CD8-positive, alpha-beta T cell (primary cell): ENCODE measurements at regions of chr18 and their contacts with region 1.

Region 1: GRCh38 chr18:49041435-49042245 is 90.9 kb upstream of the SMAD7 start:
- DNase-seq: peak in 7 of 9 experiments; percentile 21 to 63 (median 56)
- ATAC-seq: peak; percentile 56
- H3K4me3 ChIP-seq: no peak overlapping the region
- H3K4me3 Mint-ChIP-seq: no peak overlapping the region
- H3K27ac ChIP-seq: no peak overlapping the region
- H3K27ac Mint-ChIP-seq: no peak overlapping the region
- H3K4me1 ChIP-seq: no peaks in the 10 kb centered on the region
- H3K4me1 Mint-ChIP-seq: peaks cover 4% of the 10 kb centered on the region
- H3K27me3 ChIP-seq: no peaks in the 10 kb centered on the region
- H3K27me3 Mint-ChIP-seq: no peaks in the 10 kb centered on the region
- CTCF ChIP-seq: peak; percentile 28

Region 2: DNA sequence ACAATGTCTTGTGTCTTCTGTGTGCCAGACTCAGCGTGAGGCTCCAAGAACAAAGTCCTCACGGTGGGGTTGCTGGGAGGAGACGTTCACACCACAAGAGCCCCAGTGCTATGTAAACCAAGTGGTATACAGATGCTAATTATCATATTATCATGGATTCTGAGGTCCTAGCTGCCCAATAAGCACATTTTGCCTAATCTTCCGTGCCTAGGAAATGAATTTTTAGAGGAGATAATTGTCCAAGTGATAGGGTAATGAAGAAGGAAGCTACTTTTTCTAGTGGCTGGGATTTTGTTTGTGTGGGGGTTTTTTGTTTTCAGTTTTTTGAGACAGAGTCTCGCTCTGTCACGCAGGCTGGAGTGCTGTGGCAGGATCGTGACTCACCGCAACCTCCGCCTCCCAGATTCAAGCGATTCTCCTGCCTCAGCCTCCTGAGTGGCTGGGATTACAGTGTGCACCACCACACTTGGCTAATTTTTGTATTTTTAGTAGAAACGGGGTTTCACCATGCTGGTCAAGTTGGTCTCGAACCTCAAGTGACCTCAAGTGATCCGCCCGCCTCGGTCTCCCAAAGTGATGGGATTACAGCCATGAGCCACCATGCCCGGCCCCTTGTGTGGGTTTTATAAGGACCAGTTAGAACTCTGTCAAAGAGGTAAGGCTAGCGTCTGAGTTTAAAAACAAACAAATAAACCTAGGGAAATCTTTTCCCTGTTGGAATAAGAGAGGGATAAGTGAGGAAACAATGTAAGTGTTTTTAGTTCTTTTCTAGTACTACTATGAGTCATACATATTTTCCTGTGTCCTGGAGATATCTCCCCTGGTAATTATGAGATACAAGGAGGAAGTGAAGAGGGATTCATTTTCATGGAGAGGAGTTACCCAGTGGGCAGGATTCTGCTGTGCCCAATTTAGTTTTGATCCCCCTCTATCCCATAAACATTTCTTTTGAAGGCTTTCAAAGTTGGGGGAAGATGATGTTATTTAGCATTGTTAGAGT is 81.4 kb before region 1 on chr18:
- CTCF ChIA-PET with region 1: no interaction called
- POLR2A ChIA-PET with region 1: no interaction called
- intact Hi-C with region 1: loop called in 1 of 2 experiments (anchors 5 kb)
- DNase-seq: no peak
- ATAC-seq: no peak
- H3K4me3 ChIP-seq: no peak overlapping the region
- H3K4me3 Mint-ChIP-seq: no peak overlapping the region
- H3K27ac ChIP-seq: no peak overlapping the region
- H3K27ac Mint-ChIP-seq: no peak overlapping the region
- H3K4me1 ChIP-seq: peaks cover 8% of the 10 kb centered on the region
- H3K4me1 Mint-ChIP-seq: peaks cover 22% of the 10 kb centered on the region
- H3K27me3 ChIP-seq: no peaks in the 10 kb centered on the region
- H3K27me3 Mint-ChIP-seq: no peaks in the 10 kb centered on the region
- CTCF ChIP-seq: no peak

Region 3: GRCh38 chr18:49052891-49053644 is 11.4 kb after region 1 on chr18:
- CTCF ChIA-PET with region 1: interaction called, 20 read pairs
- POLR2A ChIA-PET with region 1: no interaction called
- intact Hi-C with region 1: no loop called
- DNase-seq: peak in 8 of 9 experiments; percentile 17 to 80 (median 43)
- ATAC-seq: peak; percentile 79
- H3K4me3 ChIP-seq: peak overlapping the region in 1 of 2 experiments; percentile 20
- H3K4me3 Mint-ChIP-seq: peak overlapping the region; percentile 60
- H3K27ac ChIP-seq: peak overlapping the region in 1 of 2 experiments; percentile 37
- H3K27ac Mint-ChIP-seq: peak overlapping the region; percentile 73
- H3K4me1 ChIP-seq: peaks cover 19% of the 10 kb centered on the region
- H3K4me1 Mint-ChIP-seq: peaks cover 38% of the 10 kb centered on the region
- H3K27me3 ChIP-seq: no peaks in the 10 kb centered on the region
- H3K27me3 Mint-ChIP-seq: no peaks in the 10 kb centered on the region
- CTCF ChIP-seq: no peak

Region 4: DNA sequence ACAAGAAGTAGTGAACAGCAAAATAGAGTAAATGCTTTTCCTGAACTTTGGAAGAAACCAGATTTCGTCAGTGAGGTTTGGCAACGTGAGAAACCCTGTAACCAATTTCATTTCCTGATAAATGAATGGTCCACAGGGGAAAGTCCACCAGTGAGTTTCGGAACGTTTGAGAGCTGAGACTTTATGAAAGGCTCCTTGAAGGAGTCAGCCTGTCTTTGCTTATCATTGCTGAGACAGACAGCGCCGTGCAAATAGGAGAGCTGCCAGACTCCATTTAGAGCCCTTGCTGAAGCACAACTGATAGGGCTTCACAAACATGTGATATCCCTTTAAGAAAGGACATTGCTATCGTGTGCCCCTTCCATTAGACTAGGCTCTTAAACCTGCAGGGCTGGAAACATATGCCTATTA is 30.9 kb after region 1 on chr18:
- CTCF ChIA-PET with region 1: no interaction called
- POLR2A ChIA-PET with region 1: no interaction called
- intact Hi-C with region 1: no loop called
- DNase-seq: no peak
- ATAC-seq: no peak
- H3K4me3 ChIP-seq: no peak overlapping the region
- H3K4me3 Mint-ChIP-seq: no peak overlapping the region
- H3K27ac ChIP-seq: no peak overlapping the region
- H3K27ac Mint-ChIP-seq: no peak overlapping the region
- H3K4me1 ChIP-seq: no peaks in the 10 kb centered on the region
- H3K4me1 Mint-ChIP-seq: no peaks in the 10 kb centered on the region
- H3K27me3 ChIP-seq: no peaks in the 10 kb centered on the region
- H3K27me3 Mint-ChIP-seq: no peaks in the 10 kb centered on the region
- CTCF ChIP-seq: no peak